ENCODE measurements at regions of chr12 and their contacts with region 1.

Region 1: DNA sequence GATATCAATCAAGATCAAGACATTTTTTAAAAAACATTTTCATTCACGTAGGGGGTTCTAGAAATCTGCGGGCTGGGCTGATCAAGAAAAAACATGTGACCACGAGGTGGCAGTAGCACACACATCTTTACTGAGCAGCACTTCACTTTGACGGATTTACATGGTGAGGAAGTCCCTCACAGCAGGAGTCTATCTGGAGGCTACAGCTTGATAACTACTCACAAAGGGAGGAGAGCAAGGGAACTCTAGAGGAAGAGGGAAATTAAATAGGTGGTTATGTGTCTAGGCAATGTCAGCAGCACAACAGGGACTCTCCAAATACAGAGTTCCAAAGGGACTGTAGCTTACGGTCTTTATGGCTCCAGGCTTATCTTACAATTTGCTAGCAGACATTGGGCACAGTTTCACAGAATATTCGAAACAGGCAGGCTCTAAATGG is 248.1 kb downstream of the DPY19L2 start:
- DNase-seq: peak; percentile 80
- H3K4me3 ChIP-seq: no peak overlapping the region
- H3K27ac ChIP-seq: no peak overlapping the region
- H3K4me1 ChIP-seq: no peaks in the 10 kb centered on the region
- H3K27me3 ChIP-seq: peaks cover 0 to 12% of the 10 kb centered on the region in 2 experiments
- CTCF ChIP-seq: peak; percentile 58 to 68
- POLR2A ChIP-seq: no peak

Region 2: GRCh38 chr12:63103494-63104131 is 316.6 kb before region 1 on chr12:
- CTCF ChIA-PET with region 1: no interaction called
- POLR2A ChIA-PET with region 1: no interaction called
- dilution Hi-C with region 1: no loop called
- intact Hi-C with region 1: loop called (anchors 1 kb)
- DNase-seq: peak; percentile 36
- H3K4me3 ChIP-seq: no peak overlapping the region
- H3K27ac ChIP-seq: no peak overlapping the region
- H3K4me1 ChIP-seq: no peaks in the 10 kb centered on the region
- H3K27me3 ChIP-seq: peaks cover 4 to 5% of the 10 kb centered on the region in 2 experiments
- CTCF ChIP-seq: peak; percentile 46 to 51
- POLR2A ChIP-seq: no peak

Region 3: GRCh38 chr12:63353559-63353958 is 66.7 kb before region 1 on chr12:
- CTCF ChIA-PET with region 1: interaction called, 14 read pairs
- POLR2A ChIA-PET with region 1: no interaction called
- dilution Hi-C with region 1: no loop called
- intact Hi-C with region 1: no loop called
- DNase-seq: peak; percentile 70
- H3K4me3 ChIP-seq: no peak overlapping the region
- H3K27ac ChIP-seq: no peak overlapping the region
- H3K4me1 ChIP-seq: no peaks in the 10 kb centered on the region
- H3K27me3 ChIP-seq: peaks cover 0 to 2% of the 10 kb centered on the region in 2 experiments
- CTCF ChIP-seq: peak in 1 of 2 donors; percentile 13
- POLR2A ChIP-seq: no peak

Region 4: DNA sequence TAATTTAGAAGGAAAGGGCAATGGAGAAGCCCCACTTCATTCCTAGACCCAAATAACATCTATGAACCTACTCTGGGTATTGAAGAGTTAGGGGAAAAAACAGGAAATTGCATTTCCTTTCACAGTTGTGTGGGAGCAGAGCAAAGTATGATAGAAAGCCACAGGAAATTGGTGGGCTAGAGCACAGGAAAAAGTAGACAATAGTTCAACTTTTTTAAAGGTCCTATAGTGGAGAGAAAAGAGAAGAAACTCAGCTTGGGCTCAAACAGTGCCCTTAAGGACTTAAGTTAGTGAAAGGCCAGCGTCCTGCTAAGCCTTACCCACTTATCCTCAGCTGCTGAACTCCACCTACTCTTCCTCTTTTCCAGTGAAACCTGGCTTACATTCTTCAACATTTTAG is 10.0 kb before region 1 on chr12:
- CTCF ChIA-PET with region 1: interaction called, 18 read pairs
- POLR2A ChIA-PET with region 1: no interaction called
- dilution Hi-C with region 1: no loop called
- intact Hi-C with region 1: no loop called
- DNase-seq: peak; percentile 83
- H3K4me3 ChIP-seq: no peak overlapping the region
- H3K27ac ChIP-seq: peak overlapping the region; percentile 67
- H3K4me1 ChIP-seq: peaks cover 20% of the 10 kb centered on the region
- H3K27me3 ChIP-seq: no peaks in the 10 kb centered on the region
- CTCF ChIP-seq: no peak
- POLR2A ChIP-seq: no peak

Region 5: DNA sequence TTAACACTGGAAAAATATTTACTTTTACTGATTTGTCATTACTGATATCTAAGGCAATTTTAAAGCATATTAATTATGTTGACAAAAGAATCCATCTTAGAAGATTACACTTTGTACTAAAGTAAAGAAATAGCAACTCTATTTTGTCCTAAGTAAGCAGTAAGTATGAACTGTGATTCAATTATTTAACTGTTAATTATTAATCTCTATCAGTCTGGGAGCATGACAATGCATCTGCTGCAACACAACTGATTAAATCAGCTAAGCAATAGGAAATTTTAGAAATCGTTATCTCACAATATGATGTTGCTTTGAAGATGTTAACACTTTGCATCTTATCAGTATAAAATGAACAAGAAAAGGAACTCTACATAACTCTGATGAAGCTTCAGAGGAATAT is 75.7 kb after region 1 on chr12:
- CTCF ChIA-PET with region 1: no interaction called
- POLR2A ChIA-PET with region 1: no interaction called
- dilution Hi-C with region 1: no loop called
- intact Hi-C with region 1: no loop called
- DNase-seq: no peak
- H3K4me3 ChIP-seq: no peak overlapping the region
- H3K27ac ChIP-seq: no peak overlapping the region
- H3K4me1 ChIP-seq: no peaks in the 10 kb centered on the region
- H3K27me3 ChIP-seq: no peaks in the 10 kb centered on the region
- CTCF ChIP-seq: no peak
- POLR2A ChIP-seq: no peak

Region 6: DNA sequence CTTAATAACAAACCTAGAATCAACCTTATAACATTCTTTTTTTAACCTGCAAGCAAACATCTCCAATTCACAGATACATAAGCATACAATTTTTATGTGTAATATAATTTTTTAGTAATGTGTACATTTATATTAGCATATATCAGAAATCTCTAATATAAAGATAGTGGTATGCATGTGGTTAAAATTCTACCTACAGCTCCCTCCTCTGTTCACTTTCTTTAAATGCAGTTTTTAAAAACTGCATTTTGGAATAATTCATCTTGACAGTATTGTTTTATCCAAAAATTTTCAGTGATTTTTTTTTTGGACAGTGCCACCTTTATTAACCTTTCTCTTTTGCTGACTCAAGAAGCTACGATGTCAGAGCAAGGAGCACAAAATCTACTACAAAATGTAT is 346.3 kb after region 1 on chr12:
- CTCF ChIA-PET with region 1: interaction called, 12 read pairs
- POLR2A ChIA-PET with region 1: no interaction called
- dilution Hi-C with region 1: no loop called
- intact Hi-C with region 1: no loop called
- DNase-seq: no peak
- H3K4me3 ChIP-seq: no peak overlapping the region
- H3K27ac ChIP-seq: no peak overlapping the region
- H3K4me1 ChIP-seq: no peaks in the 10 kb centered on the region
- H3K27me3 ChIP-seq: peaks cover 0 to 8% of the 10 kb centered on the region in 2 experiments
- CTCF ChIP-seq: no peak
- POLR2A ChIP-seq: no peak

Region 7: GRCh38 chr12:63802012-63802608 is 381.9 kb after region 1 on chr12:
- CTCF ChIA-PET with region 1: interaction called, 12 read pairs
- POLR2A ChIA-PET with region 1: no interaction called
- dilution Hi-C with region 1: no loop called
- intact Hi-C with region 1: loop called (anchors 1 kb)
- DNase-seq: peak; percentile 43
- H3K4me3 ChIP-seq: no peak overlapping the region
- H3K27ac ChIP-seq: no peak overlapping the region
- H3K4me1 ChIP-seq: no peaks in the 10 kb centered on the region
- H3K27me3 ChIP-seq: no peaks in the 10 kb centered on the region
- CTCF ChIP-seq: peak; percentile 31
- POLR2A ChIP-seq: no peak